Psoas muscle (tissue), 8 donors: ENCODE measurements at regions of chr13 and their contacts with region 1.

Region 1: DNA sequence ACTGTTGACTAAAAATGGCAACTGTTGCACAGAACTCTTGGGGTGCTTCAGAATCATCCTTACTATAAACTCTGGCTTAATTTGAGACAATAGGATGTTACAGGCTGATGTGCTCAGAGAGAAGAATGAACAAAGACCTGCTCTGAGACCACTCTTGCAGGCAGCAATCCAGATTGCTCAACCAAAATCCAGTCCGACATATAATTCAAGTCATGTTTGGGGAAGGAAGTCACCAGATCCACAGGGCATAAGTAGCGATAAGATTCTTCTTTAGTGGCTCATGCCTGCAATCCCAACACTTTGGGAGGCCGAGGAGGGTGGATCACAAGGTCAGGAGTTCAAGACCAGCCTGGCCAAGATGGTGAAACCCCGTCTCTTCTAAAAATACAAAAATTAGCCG is 20.6 kb downstream of the MTMR6 start:
- DNase-seq: no peak
- ATAC-seq: no peak
- H3K4me3 ChIP-seq: no peak overlapping the region
- H3K27ac ChIP-seq: no peak overlapping the region
- H3K4me1 ChIP-seq: no peaks in the 10 kb centered on the region
- H3K27me3 ChIP-seq: no peaks in the 10 kb centered on the region
- CTCF ChIP-seq: no peak

Region 2: DNA sequence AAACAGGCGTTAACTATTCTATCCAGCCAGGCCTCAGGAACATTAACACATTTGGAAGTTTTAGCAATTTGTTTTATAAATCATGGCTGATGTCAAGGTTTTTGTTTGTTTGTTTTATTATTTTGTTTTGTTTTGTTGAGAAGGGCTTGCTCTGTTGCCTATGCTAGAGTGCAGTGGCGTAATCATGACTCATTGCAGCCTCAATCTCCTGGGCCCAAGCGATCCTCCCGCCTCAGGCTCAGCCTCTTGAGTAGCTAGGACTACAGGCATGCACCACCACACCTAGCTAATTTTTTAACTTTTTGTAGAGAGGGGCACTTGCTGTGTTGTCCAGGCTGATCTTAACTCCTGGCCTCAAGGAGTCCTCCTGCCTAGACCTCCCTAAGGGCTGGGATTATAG is 63.0 kb after region 1 on chr13:
- intact Hi-C with region 1: loop called in 1 of 2 experiments (anchors 2 kb)
- DNase-seq: peak in 1 of 2 donors; percentile 13
- ATAC-seq: no peak
- H3K4me3 ChIP-seq: no peak overlapping the region
- H3K27ac ChIP-seq: no peak overlapping the region
- H3K4me1 ChIP-seq: no peaks in the 10 kb centered on the region
- H3K27me3 ChIP-seq: no peaks in the 10 kb centered on the region
- CTCF ChIP-seq: no peak